A549 (cell line): ENCODE measurements at regions of chr11 and their contacts with region 1.

Region 1: GRCh38 chr11:809287-810039 is at the start of gene RPLP2:
- DNase-seq: peak; percentile 93 to 99
- ATAC-seq: peak; percentile 83 to 88
- H3K4me3 ChIP-seq: peak within 1 kb of the TSS; percentile 94
- H3K27ac ChIP-seq: peak within 1 kb of the TSS; percentile 95 to 97
- H3K4me1 ChIP-seq: peaks cover 40% of the 10 kb centered on the region
- CTCF ChIP-seq: no peak
- EP300 ChIP-seq: no peak
- POLR2A ChIP-seq: peak; percentile 89
- RAD21 ChIP-seq: no peak
- polyA plus RNA-seq, gene RPLP2: 1,346 and 1,493 TPM in 2 replicates

Region 2: GRCh38 chr11:798093-798713 is 11.3 kb before region 1 on chr11 and contains the start of gene SLC25A22:
- CTCF ChIA-PET with region 1: interaction called, 10 read pairs
- POLR2A ChIA-PET with region 1: interaction called, 6 read pairs
- DNase-seq: peak; percentile 79 to 87
- ATAC-seq: peak; percentile 51 to 69
- H3K4me3 ChIP-seq: peak within 1 kb of the TSS; percentile 66
- H3K27ac ChIP-seq: peak within 1 kb of the TSS; percentile 76 to 99
- H3K4me1 ChIP-seq: peaks cover 28% of the 10 kb centered on the region
- CTCF ChIP-seq: peak; percentile 84
- EP300 ChIP-seq: no peak
- POLR2A ChIP-seq: peak; percentile 67
- RAD21 ChIP-seq: no peak; a peak in 3 of 5 replicates
- polyA plus RNA-seq, gene SLC25A22: 11.6 and 13.5 TPM in 2 replicates

Region 3: DNA sequence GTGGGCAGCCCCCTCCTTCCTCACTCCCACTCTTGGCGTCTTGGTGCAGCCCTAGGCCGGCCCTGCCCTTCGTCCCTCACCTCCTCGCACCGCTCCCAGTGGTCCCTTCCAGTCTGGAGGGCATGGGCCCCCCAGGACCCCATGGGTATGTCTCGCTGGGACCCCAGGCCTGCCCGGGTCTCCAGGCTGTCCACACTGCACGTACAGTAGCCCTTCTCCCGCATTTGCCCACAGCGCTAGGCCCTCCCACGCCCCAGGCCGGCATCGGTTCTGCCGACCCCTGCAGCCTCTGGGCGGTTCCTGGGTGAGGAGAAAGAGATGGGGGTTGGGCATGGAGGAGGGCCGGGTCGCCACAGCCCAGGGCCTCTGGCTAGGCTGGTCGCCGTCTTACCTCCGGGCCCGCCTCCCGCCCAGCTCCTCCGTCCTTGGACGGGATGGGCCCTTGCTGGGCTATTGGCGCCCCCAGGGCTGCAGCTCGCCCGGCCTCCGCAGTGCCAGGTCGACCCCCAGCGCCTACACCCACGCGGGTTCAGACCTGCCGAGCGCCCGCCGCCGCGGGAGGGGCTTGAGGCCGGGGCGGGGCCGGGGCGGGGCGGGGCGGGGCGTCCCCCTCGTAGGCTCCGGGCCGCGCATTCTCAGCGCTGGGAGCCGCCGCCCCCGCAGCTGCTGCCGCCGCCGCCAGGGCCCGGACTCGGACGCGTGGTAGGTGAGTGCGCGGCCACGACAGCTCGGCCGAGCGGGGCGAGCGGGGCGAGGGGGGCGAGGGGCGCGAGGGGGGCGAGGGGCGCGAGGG is 23.1 kb after region 1 on chr11 and contains the start of gene CD151:
- CTCF ChIA-PET with region 1: no interaction called
- POLR2A ChIA-PET with region 1: interaction called, 20 read pairs
- DNase-seq: peak in 1 of 2 experiments; percentile 68
- ATAC-seq: peak; percentile 8 to 26
- H3K4me3 ChIP-seq: peak within 1 kb of the TSS; percentile 86
- H3K27ac ChIP-seq: peak within 1 kb of the TSS; percentile 98 to 100
- H3K4me1 ChIP-seq: peaks cover 56% of the 10 kb centered on the region
- CTCF ChIP-seq: no peak
- EP300 ChIP-seq: no peak
- POLR2A ChIP-seq: peak; percentile 37; the same call in 1 of the 2 replicates
- RAD21 ChIP-seq: no peak
- polyA plus RNA-seq, gene CD151: 409 and 523 TPM in 2 replicates